ENCODE measurements at regions of chr14 and their contacts with region 1.

Region 1: DNA sequence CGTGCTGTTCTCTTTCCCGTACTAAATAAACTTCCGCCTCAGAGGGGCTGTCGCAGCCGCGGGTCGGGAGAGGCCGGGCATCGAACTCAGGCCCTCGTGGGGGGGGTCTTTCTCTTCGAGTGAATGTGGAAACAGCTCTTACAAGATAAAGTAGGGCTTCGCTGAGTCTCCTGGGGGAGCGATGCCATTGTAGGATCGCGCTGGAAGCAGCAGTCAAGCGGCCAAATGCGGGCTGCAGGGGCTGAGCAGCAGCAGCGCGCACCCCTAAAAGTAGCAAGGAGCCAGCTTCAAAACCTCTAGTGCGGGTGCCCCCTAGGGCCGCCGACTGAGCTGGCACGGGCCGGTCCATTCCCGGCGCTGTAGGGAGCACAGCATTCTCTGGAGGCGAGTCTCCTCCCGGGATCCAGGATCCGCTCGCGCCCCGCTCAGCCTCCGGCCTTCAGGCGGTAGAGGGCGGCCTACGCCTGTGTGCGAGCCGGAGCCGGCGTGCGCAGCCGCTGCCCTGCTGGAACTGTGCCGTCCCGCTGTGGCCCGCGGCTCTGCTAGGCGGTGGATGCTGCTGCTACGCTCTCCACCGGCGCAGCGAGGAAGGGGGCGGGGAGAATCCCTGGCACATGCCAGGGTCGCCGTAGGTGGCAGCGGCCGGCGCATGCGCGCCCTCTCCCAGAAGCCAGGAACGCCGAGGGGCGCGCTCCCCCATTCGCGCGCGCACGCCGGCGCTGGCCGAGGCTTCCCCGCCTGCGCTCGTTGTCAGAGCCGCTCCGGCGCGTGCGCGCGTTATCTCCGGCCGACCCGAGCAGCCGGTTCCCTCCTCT is at the start of gene FUT8:
- DNase-seq: peak; percentile 95
- H3K4me3 ChIP-seq: peak within 1 kb of the TSS; percentile 91
- H3K27ac ChIP-seq: peak within 1 kb of the TSS; percentile 85
- H3K4me1 ChIP-seq: peaks cover 31% of the 10 kb centered on the region
- CTCF ChIP-seq: peak; percentile 75
- total RNA-seq, gene FUT8: 90.3 and 128 TPM in 2 replicates

Region 2: GRCh38 chr14:65164068-65164824 is 248.0 kb before region 1 on chr14:
- CTCF ChIA-PET with region 1: no interaction called
- POLR2A ChIA-PET with region 1: interaction called, 13 read pairs
- intact Hi-C with region 1: loop called (anchors 1 kb)
- DNase-seq: peak; percentile 79
- H3K4me3 ChIP-seq: no peak overlapping the region
- H3K27ac ChIP-seq: peak overlapping the region; percentile 17
- H3K4me1 ChIP-seq: peaks cover 53% of the 10 kb centered on the region
- CTCF ChIP-seq: peak; percentile 99

Region 3: GRCh38 chr14:65222440-65222858 is 189.8 kb before region 1 on chr14:
- CTCF ChIA-PET with region 1: interaction called, 3 read pairs
- POLR2A ChIA-PET with region 1: interaction called, 3 read pairs
- intact Hi-C with region 1: loop called (anchors 1 kb)
- DNase-seq: peak; percentile 77
- H3K4me3 ChIP-seq: no peak overlapping the region
- H3K27ac ChIP-seq: no peak overlapping the region
- H3K4me1 ChIP-seq: peaks cover 50% of the 10 kb centered on the region
- CTCF ChIP-seq: peak; percentile 99

Region 4: GRCh38 chr14:65321370-65321875 is 90.8 kb before region 1 on chr14:
- CTCF ChIA-PET with region 1: interaction called, 9 read pairs
- POLR2A ChIA-PET with region 1: interaction called, 17 read pairs
- intact Hi-C with region 1: loop called (anchors 1 kb)
- DNase-seq: peak; percentile 38
- H3K4me3 ChIP-seq: peak overlapping the region; percentile 11
- H3K27ac ChIP-seq: peak overlapping the region; percentile 96
- H3K4me1 ChIP-seq: peaks cover 89% of the 10 kb centered on the region
- CTCF ChIP-seq: no peak

Region 5: DNA sequence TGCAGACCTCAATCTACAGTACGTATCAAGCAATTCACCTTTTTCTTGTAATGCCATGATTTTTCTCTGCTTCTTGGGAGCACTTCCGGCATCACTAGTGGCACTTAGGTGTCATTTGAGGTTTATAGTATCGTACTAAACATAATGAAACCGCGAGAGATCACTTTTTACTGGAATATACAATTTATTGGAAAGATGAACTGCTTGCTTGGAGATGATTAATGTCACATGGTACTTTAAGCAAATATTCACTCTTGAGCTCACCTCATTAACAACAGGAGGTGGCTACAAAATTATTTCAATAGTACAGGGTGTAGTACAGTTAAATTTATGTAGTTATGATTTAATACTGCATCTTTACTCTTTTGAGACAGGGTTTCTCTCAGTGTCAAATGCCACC is 11.7 kb after region 1 on chr14:
- CTCF ChIA-PET with region 1: no interaction called
- POLR2A ChIA-PET with region 1: interaction called, 21 read pairs
- intact Hi-C with region 1: no loop called
- DNase-seq: no peak
- H3K4me3 ChIP-seq: no peak overlapping the region
- H3K27ac ChIP-seq: no peak overlapping the region
- H3K4me1 ChIP-seq: peaks cover 18% of the 10 kb centered on the region
- CTCF ChIP-seq: no peak

Region 6: GRCh38 chr14:65501328-65501727 is 89.1 kb after region 1 on chr14:
- CTCF ChIA-PET with region 1: no interaction called
- POLR2A ChIA-PET with region 1: no interaction called
- intact Hi-C with region 1: no loop called
- DNase-seq: no peak
- H3K4me3 ChIP-seq: no peak overlapping the region
- H3K27ac ChIP-seq: no peak overlapping the region
- H3K4me1 ChIP-seq: peaks cover 23% of the 10 kb centered on the region
- CTCF ChIP-seq: 0 out of 2 replicates have a peak, but pooled peaks have one; percentile 12

Region 7: GRCh38 chr14:65958664-65959562 is 546.7 kb after region 1 on chr14:
- CTCF ChIA-PET with region 1: no interaction called
- POLR2A ChIA-PET with region 1: interaction called, 3 read pairs
- intact Hi-C with region 1: loop called (anchors 1 kb)
- DNase-seq: peak; percentile 60
- H3K4me3 ChIP-seq: no peak overlapping the region
- H3K27ac ChIP-seq: no peak overlapping the region
- H3K4me1 ChIP-seq: peaks cover 5% of the 10 kb centered on the region
- CTCF ChIP-seq: peak; percentile 83

Measured in OCI-LY7 (cell line).